GM10248 (cell line): ENCODE measurements at regions of chr3 and their contacts with region 1.

Region 1: GRCh38 chr3:116770815-116771450 is 61.4 kb downstream of the TUSC7 start:
- DNase-seq: peak; percentile 44
- CTCF ChIP-seq: peak; percentile 98

Region 2: GRCh38 chr3:116757315-116757714 is 13.6 kb before region 1 on chr3:
- CTCF ChIA-PET with region 1: interaction called, 14 read pairs
- POLR2A ChIA-PET with region 1: no interaction called
- DNase-seq: no peak
- CTCF ChIP-seq: no peak

Region 3: DNA sequence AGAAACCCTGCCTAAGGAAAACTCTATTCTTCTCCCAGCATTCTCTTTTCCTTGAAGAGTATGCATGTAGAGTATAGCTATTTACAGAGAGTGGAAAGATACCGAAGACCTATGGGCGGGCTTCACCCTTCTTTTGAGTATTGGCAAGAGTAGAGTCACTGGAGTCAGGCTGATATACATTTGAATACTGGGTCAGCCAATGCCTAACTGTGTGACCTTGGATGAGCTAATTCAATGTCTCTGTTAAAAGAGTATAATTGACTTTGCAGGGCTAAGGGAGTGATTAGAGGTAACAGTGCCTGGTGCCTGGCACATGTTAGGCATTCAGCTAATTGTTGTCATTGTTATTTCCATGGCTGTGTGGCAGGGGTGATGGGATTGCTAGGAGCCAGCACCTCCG is 14.3 kb after region 1 on chr3:
- CTCF ChIA-PET with region 1: interaction called, 56 read pairs
- POLR2A ChIA-PET with region 1: no interaction called
- DNase-seq: no peak
- CTCF ChIP-seq: no peak

Region 4: GRCh38 chr3:117526470-117527079 is 755.6 kb after region 1 on chr3:
- CTCF ChIA-PET with region 1: interaction called, 13 read pairs
- POLR2A ChIA-PET with region 1: no interaction called
- DNase-seq: peak; percentile 5
- CTCF ChIP-seq: peak; percentile 51